Right ventricle myocardium inferior (tissue), 1 donor: ENCODE measurements at regions of chr3 and their contacts with region 1.

Region 1: DNA sequence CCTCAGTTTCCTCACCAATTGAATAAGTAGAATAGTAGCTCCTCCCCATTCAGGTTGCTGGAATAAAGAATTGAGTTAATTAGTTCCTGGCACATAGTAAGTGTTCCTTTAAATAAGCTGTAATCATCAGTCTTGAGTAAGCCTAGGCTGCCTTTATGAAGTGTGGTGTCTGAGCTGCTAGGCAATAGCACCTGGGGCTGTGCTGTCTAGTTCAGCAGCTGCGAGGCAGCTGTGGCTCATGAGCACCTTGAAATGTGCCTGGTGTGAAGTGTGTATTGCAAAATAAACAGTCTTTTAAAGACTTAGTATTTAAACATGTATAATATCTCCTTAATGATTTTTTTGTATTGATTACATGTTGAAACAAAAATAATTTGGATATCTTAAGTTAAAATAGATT is 77.6 kb downstream of the TOP2B start:
- DNase-seq: no peak
- ATAC-seq: no peak

Region 2: GRCh38 chr3:25033407-25034029 is 553.6 kb before region 1 on chr3:
- intact Hi-C with region 1: loop called (anchors 5 kb)
- DNase-seq: peak; percentile 64
- ATAC-seq: peak; percentile 74

Region 3: DNA sequence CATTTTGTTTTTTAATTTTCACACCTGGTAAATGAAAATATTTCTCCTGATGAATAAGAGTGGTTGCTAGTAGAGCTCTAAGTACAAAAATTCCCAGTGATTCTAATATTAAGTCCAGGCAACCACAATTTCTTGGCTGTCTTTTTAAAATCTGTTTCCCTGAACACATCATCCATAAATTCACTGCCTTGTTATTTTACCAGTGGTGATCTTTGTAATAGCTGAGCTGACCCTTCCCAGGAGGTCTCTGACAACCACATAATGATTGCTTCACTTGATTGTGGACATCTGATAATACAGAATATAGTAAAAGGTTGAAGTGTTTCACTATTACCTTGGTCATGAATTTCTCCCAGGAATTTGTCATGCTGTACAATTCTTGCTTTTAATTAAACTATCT is 91.5 kb after region 1 on chr3:
- intact Hi-C with region 1: no loop called
- DNase-seq: no peak
- ATAC-seq: no peak

Region 4: DNA sequence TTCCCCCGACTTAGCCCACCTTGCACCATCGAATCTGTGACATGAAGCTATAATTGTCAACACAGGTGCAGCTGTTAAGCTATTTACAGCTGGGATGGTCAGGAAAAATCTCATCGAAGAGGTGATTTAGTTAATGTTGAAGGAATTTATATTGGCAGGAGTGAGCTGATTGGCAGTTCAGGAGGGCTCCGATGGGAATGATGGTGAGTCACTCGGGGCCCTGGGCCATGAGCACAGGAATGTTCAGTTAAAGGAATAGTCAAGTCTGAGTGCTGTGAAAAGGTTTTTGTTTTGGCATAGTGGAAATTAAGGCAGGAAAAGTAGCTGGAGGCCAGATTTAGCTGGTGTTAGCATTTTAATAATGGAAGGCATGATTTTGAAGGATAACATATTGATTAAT is 298.4 kb after region 1 on chr3:
- intact Hi-C with region 1: no loop called
- DNase-seq: no peak
- ATAC-seq: no peak